ENCODE measurements at regions of chr11 and their contacts with region 1.

Region 1: DNA sequence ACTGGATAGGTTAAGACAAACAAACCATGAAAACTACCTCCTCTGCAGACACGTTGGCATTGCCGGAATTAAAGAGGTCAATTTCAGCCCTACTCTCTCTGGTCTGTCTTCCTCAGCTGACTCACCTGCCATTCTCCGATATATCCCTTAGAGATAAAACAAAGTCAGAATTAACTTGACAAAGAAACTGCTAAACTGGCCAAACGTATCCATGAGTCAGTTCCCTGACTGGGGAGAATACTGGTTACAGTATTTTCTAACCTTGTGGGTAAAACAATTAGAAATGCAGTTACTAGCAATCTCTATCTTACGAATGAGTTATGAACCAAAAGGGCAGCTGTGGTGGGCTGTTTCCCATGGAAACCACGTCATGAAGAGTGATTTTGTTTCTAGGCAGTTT is 96.2 kb downstream of the RDX start:
- DNase-seq: no peak
- ATAC-seq: no peak
- H3K4me3 ChIP-seq: no peak overlapping the region
- H3K27ac ChIP-seq: no peak overlapping the region
- H3K4me1 ChIP-seq: no peaks in the 10 kb centered on the region
- H3K27me3 ChIP-seq: no peaks in the 10 kb centered on the region
- CTCF ChIP-seq: no peak

Region 2: GRCh38 chr11:109914809-109915653 is 285.2 kb before region 1 on chr11:
- intact Hi-C with region 1: no loop called
- DNase-seq: no peak
- ATAC-seq: peak in 1 of 2 donors; percentile 33
- H3K4me3 ChIP-seq: no peak overlapping the region
- H3K27ac ChIP-seq: no peak overlapping the region
- H3K4me1 ChIP-seq: peaks cover 9% of the 10 kb centered on the region
- H3K27me3 ChIP-seq: no peaks in the 10 kb centered on the region
- CTCF ChIP-seq: no peak

Region 3: DNA sequence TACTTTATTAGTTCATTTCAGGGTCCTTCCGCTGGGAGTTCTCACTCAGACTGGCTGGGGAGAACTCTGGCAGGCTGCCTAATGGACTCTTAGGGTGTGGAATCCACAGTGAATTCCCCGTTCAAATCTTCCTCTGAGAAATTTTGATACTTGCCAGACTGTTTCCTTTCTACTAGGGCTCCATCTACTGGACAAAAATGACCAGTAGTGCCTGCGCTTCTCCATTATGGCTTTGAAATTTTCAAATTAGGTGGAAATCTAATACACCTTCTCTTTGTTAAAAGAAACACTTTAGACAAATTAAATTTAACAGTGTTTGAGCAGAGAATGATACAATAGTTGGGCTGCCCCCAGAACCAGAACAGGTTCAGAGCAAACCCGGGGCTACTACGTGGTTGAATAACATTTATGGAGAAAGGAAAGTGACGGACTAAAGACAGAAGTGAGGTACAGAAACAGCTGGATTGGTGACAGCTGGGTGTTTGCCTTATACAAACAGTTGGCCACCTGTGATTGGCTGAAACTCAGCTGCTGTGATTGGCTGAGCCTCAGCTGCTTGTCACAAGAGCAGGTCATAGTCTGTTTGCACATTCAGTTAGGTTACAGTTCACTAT is 176.6 kb after region 1 on chr11:
- intact Hi-C with region 1: loop called (anchors 5 kb)
- DNase-seq: peak; percentile 74
- ATAC-seq: peak; percentile 88 to 93
- H3K4me3 ChIP-seq: peak overlapping the region; percentile 28
- H3K27ac ChIP-seq: peak overlapping the region; percentile 56
- H3K4me1 ChIP-seq: peaks cover 31% of the 10 kb centered on the region
- H3K27me3 ChIP-seq: no peaks in the 10 kb centered on the region
- CTCF ChIP-seq: peak; percentile 82

Region 4: DNA sequence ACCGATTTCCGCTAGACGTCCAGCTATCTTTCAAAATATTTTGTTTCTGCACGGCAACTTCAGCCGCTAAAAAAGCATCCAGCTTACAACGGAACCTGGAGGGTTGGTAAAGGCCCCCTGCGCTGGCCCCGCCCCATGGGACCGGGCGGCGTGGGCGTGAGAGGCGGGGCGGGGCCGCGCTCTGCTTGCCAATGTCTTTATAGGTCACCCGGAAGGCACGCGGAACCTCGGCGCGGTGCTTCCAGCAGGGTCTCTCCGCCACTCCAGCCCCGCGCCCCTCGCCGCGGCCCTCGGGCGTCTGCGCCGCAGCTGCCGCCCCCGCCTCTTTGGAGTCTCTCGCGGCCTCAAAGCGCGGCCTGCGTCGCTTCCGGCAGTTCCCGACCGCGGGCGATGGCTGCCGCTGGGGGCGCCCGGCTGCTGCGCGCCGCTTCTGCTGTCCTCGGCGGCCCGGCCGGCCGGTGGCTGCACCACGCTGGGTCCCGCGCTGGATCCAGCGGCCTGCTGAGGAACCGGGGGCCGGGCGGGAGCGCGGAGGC is 229.6 kb after region 1 on chr11 and contains the start of gene FDX1:
- intact Hi-C with region 1: loop called (anchors 5 kb)
- DNase-seq: peak; percentile 93
- ATAC-seq: peak; percentile 95
- H3K4me3 ChIP-seq: peak within 1 kb of the TSS; percentile 85
- H3K27ac ChIP-seq: peak within 1 kb of the TSS; percentile 92
- H3K4me1 ChIP-seq: peaks cover 40% of the 10 kb centered on the region
- H3K27me3 ChIP-seq: no peaks in the 10 kb centered on the region
- CTCF ChIP-seq: peak; percentile 67
- total RNA-seq, gene FDX1: 19.5 TPM

Region 5: DNA sequence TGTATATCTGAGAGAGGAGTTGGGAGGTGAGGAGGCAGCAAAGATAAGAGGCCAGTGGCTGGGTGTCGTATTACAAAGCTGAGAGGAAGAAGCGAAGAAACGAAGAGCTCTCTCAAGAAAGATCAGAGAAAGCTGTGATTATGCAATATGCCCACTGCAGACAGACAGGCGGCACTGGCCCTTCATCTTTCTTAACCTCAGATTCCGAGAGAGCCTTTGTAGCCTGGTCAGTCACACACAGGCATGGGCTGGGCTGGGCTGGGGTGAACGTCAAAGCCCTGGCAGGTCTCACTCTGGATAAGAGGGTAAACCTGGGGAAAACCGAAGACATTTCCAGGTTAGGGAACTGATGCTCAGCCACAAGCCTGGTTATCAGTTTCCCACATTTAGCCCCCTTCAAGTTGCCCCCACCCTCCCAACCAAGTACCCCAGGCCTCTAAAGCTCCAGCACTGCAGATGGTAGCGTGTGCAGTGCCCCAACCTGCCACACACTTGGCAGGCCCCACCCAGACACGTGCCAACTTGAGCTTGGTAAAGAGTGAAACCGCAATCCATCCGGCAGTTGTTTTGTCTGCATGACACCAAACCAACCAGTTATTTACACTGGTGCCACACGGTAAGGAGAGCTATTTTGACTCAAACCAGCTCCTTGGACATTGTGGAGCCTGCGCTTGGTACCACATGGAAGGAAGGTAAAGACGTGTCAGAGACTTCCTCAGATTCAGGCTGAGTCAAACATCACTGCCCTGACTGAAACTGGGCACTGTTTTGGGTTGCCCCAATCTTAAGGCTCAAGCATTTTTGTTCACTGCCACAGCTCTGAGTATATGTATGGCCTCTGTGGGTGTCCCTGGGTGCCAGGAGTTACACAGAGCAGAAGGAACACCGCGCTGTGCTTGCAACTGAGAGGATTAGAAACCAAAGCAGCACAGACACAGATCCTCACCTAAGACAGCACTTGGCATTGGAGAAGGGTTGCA is 365.4 kb after region 1 on chr11:
- intact Hi-C with region 1: no loop called
- DNase-seq: peak; percentile 53
- ATAC-seq: peak; percentile 77
- H3K4me3 ChIP-seq: no peak overlapping the region
- H3K27ac ChIP-seq: no peak overlapping the region
- H3K4me1 ChIP-seq: no peaks in the 10 kb centered on the region
- H3K27me3 ChIP-seq: no peaks in the 10 kb centered on the region
- CTCF ChIP-seq: no peak

Measured in lower lobe of right lung (tissue), 2 donors.